K562 (cell line): ENCODE measurements at regions of chr19 and their contacts with region 1.

Region 1: GRCh38 chr19:48271531-48272151 is 1.8 kb downstream of the ZNF114 start:
- DNase-seq: no peak
- ATAC-seq: no peak
- H3K4me3 ChIP-seq: no peak overlapping the region
- H3K27ac ChIP-seq: no peak overlapping the region
- H3K4me1 ChIP-seq: peaks cover 2 to 5% of the 10 kb centered on the region in 2 experiments; a peak in 2 of 5 replicates
- H3K27me3 ChIP-seq: no peaks in the 10 kb centered on the region
- CTCF ChIP-seq: no peak
- EP300 ChIP-seq: no peak
- POLR2A ChIP-seq: no peak
- RAD21 ChIP-seq: no peak

Region 2: DNA sequence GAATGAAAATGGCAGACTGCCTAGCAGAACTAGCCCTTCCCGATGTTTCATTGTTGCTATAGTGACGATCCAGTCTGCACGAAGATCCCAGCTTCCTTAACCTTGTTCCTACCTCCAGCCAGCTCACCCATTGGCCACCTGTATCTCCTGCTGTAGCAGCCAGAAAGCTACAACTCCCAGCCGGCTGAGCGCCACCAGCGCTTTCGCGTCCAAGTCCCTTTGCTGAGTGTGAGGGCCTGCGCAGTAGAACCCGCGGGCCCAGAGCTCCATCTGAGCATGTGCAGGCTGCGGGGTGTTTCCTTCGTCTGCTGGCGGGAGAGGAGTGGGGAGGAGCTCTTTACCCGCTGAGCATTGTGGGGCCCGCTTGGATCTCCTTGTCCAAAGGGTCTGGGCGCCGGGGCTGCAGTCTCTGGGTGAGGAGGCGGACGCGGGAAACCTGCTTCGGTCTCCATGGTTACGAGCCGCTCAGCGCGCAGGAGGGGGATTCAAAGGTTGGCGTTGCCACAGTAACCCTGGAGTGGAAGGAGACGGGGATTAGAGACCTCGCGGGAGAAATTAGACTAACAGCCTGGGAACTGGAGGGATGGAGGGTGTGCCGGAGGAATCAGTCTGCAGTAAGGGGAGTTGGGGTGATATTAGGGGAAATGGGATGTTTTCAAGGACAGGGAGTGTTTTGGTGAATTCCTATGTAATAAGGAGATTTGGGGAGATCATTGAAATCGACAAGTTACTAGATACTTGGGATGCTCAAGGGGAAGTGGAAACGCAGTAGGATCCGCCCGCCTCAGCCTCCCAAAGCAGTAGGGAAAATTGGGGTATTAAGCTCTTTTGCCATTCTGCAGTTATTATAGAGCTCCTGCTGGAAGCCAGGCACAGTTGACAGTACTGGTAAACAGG is 67.7 kb before region 1 on chr19:
- CTCF ChIA-PET with region 1: no interaction called
- POLR2A ChIA-PET with region 1: no interaction called
- in situ Hi-C with region 1: no loop called
- intact Hi-C with region 1: no loop called
- DNase-seq: peak; percentile 93 to 98 (median 96)
- ATAC-seq: peak; percentile 100
- H3K4me3 ChIP-seq: peak overlapping the region; percentile 55
- H3K27ac ChIP-seq: peak overlapping the region; percentile 75
- H3K4me1 ChIP-seq: peaks cover 8 to 17% of the 10 kb centered on the region in 2 experiments; a peak in 3 of 5 replicates
- H3K27me3 ChIP-seq: no peaks in the 10 kb centered on the region
- CTCF ChIP-seq: no peak
- EP300 ChIP-seq: no peak
- POLR2A ChIP-seq: peak; percentile 84
- RAD21 ChIP-seq: peak in 1 of 2 experiments; percentile 4; a peak in 1 of 4 replicates

Region 3: DNA sequence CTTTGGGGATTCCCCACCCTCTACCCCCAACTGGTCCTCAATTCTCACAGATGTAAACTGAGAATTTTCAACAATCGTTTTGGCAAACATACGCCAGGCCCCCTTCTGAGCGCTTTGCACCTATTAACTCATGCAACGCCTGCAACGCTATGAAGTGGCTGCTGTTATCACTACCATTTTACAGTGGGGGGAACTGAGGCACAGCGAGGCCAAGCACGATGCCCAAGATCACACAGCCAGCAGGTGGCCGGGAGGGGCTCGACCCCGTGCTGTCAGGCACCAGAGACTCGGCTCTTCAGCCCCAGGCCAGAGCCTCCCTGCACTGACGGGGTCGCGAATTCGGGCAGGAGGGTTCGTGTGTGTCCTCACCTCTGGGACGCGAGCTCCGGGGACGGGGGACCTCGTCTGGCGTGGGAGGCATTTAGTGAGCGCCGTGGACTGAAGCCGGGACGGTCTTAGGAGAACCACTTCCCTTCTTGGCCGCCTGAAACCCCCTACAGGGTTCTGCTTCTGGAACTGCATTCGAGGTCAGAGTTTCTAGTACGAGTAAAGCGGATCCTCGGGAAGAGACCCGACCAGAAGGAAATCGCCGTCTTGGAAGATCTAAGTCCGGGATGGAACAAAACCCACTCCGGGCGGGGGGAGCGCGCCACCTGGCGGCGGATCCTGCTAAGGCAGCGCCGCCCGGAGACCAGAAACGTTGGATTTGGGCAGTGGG is 19.3 kb after region 1 on chr19:
- CTCF ChIA-PET with region 1: interaction called, 26 read pairs
- POLR2A ChIA-PET with region 1: no interaction called
- in situ Hi-C with region 1: no loop called
- intact Hi-C with region 1: loop called (anchors 1 kb)
- DNase-seq: peak; percentile 71 to 80 (median 77)
- ATAC-seq: peak; percentile 89
- H3K4me3 ChIP-seq: peak overlapping the region; percentile 30
- H3K27ac ChIP-seq: no peak overlapping the region
- H3K4me1 ChIP-seq: peaks cover 7 to 13% of the 10 kb centered on the region in 2 experiments; a peak in 4 of 5 replicates
- H3K27me3 ChIP-seq: peaks cover 0 to 6% of the 10 kb centered on the region in 2 experiments; a peak in 2 of 5 replicates
- CTCF ChIP-seq: peak; percentile 94 to 96 (median 95)
- EP300 ChIP-seq: no peak
- POLR2A ChIP-seq: no peak
- RAD21 ChIP-seq: peak; percentile 73 to 92

Region 4: DNA sequence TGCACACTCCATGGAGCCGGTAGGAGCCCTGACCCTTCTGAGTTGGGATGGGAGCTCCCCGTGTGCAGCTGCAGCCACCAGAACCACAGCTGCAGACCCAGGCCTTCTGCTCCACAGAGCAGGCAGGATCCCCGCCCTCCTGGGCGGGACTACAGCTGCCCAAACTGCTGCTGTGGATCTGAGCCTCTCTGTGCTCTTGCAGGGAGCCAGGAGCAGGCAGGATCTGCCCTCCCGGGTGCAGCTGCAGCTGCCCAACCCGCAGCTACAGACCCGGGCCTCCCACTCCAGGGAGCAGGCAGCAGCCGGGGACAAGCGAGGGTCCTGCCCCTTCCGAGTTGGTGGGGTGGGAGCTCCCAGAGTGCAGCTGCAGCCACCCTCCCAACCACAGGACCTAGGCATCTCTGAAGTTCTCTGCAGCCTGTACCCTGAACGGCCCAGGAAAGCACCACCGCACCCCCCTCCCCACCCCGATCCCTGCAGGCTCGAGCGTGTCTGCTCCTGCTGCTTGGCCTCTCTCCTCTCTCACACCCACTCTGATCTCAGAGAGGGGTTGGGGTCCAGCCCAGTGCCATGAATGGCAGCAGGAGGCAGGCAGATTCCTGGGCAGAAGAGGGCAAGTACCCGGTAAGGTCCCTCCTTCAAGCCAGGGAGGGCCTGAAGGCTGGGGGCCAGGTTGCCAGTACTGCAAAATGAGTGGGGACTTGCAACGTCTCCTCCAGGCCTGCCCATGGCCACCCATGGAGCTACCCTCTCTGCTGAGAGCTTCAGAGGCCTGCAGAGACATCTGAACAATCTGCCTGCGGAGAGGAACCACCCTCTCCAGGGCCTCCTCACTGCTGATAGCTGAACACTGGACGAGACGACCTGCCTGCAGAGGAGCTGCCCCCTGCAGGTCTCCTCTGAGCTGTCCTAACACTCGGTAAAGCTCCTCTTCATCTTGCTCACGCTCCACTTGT is 37.3 kb after region 1 on chr19:
- CTCF ChIA-PET with region 1: interaction called, 5 read pairs
- POLR2A ChIA-PET with region 1: no interaction called
- in situ Hi-C with region 1: no loop called
- intact Hi-C with region 1: loop called (anchors 5 kb)
- DNase-seq: peak in 3 of 4 experiments; percentile 35 to 81 (median 45)
- ATAC-seq: peak; percentile 99
- H3K4me3 ChIP-seq: no peak overlapping the region
- H3K27ac ChIP-seq: no peak overlapping the region
- H3K4me1 ChIP-seq: peaks cover 14 to 18% of the 10 kb centered on the region in 2 experiments
- H3K27me3 ChIP-seq: peaks cover 10 to 11% of the 10 kb centered on the region in 2 experiments; a peak in 4 of 5 replicates
- CTCF ChIP-seq: peak; percentile 74 to 78 (median 74)
- EP300 ChIP-seq: no peak
- POLR2A ChIP-seq: no peak
- RAD21 ChIP-seq: peak; percentile 46 to 67; a peak in 3 of 4 replicates

Region 5: GRCh38 chr19:48582168-48582567 is 310.5 kb after region 1 on chr19:
- CTCF ChIA-PET with region 1: interaction called, 3 read pairs
- POLR2A ChIA-PET with region 1: no interaction called
- in situ Hi-C with region 1: no loop called
- intact Hi-C with region 1: loop called (anchors 5 kb)
- DNase-seq: no peak
- ATAC-seq: no peak
- H3K4me3 ChIP-seq: no peak overlapping the region
- H3K27ac ChIP-seq: no peak overlapping the region
- H3K4me1 ChIP-seq: peaks cover 3 to 8% of the 10 kb centered on the region in 2 experiments; a peak in 1 of 5 replicates
- H3K27me3 ChIP-seq: no peaks in the 10 kb centered on the region
- CTCF ChIP-seq: no peak
- EP300 ChIP-seq: no peak
- POLR2A ChIP-seq: no peak
- RAD21 ChIP-seq: no peak